Caco-2 (cell line): ENCODE measurements at regions of chr12 and their contacts with region 1.

Region 1: DNA sequence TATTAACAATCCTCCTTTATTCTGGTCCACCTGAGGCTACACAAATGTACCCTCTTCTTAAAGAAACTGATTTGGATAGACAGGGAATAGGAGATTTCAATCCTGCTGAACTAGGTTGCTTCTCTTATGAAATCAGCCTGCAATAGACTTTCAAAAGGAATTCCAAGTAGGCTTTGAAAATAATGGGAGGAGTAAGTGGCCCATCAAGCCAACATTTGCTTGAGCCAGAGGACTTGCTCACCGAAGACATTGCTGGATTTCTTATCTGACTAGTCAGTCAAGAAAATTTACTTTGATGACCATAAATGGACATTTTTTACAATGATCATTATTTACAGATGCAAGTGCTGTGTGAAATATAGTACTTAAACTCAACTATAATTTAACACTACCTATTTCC is 82.8 kb upstream of the RASSF8 start:
- DNase-seq: peak; percentile 82 to 84
- H3K4me3 ChIP-seq: no peak overlapping the region
- H3K4me3 Mint-ChIP-seq: peak overlapping the region; percentile 49
- H3K27ac Mint-ChIP-seq: peak overlapping the region; percentile 96
- H3K4me1 ChIP-seq: peaks cover 57% of the 10 kb centered on the region
- H3K4me1 Mint-ChIP-seq: peaks cover 56% of the 10 kb centered on the region
- H3K27me3 ChIP-seq: no peaks in the 10 kb centered on the region
- H3K27me3 Mint-ChIP-seq: no peaks in the 10 kb centered on the region
- CTCF ChIP-seq: no peak

Region 2: GRCh38 chr12:25813826-25814225 is 61.8 kb before region 1 on chr12:
- CTCF ChIA-PET with region 1: no interaction called
- POLR2A ChIA-PET with region 1: interaction called, 13 read pairs
- intact Hi-C with region 1: no loop called
- DNase-seq: no peak
- H3K4me3 ChIP-seq: no peak overlapping the region
- H3K4me3 Mint-ChIP-seq: no peak overlapping the region
- H3K27ac Mint-ChIP-seq: no peak overlapping the region
- H3K4me1 ChIP-seq: no peaks in the 10 kb centered on the region
- H3K4me1 Mint-ChIP-seq: no peaks in the 10 kb centered on the region
- H3K27me3 ChIP-seq: no peaks in the 10 kb centered on the region
- H3K27me3 Mint-ChIP-seq: no peaks in the 10 kb centered on the region
- CTCF ChIP-seq: no peak

Region 3: GRCh38 chr12:25914607-25915006 is 38.9 kb after region 1 on chr12:
- CTCF ChIA-PET with region 1: no interaction called
- POLR2A ChIA-PET with region 1: no interaction called
- intact Hi-C with region 1: no loop called
- DNase-seq: peak in 1 of 2 experiments; percentile 35
- H3K4me3 ChIP-seq: no peak overlapping the region
- H3K4me3 Mint-ChIP-seq: no peak overlapping the region
- H3K27ac Mint-ChIP-seq: no peak overlapping the region
- H3K4me1 ChIP-seq: peaks cover 6% of the 10 kb centered on the region
- H3K4me1 Mint-ChIP-seq: no peaks in the 10 kb centered on the region
- H3K27me3 ChIP-seq: no peaks in the 10 kb centered on the region
- H3K27me3 Mint-ChIP-seq: no peaks in the 10 kb centered on the region
- CTCF ChIP-seq: no peak